Common myeloid progenitor, CD34-positive (primary cell): ENCODE measurements at regions of chr4 and their contacts with region 1.

Region 1: GRCh38 chr4:56575820-56576429 is 70.3 kb downstream of the ARL9 start:
- DNase-seq: peak; percentile 36 to 57 (median 55)
- H3K4me3 ChIP-seq: no peak overlapping the region
- H3K27ac ChIP-seq: no peak overlapping the region
- H3K4me1 ChIP-seq: peaks cover 0 to 15% (median 3%) of the 10 kb centered on the region in 4 experiments
- H3K27me3 ChIP-seq: no peaks in the 10 kb centered on the region

Region 2: GRCh38 chr4:56496241-56496640 is 79.7 kb before region 1 on chr4:
- CTCF ChIA-PET with region 1: no interaction called
- POLR2A ChIA-PET with region 1: no interaction called
- DNase-seq: no peak
- H3K4me3 ChIP-seq: no peak overlapping the region
- H3K27ac ChIP-seq: no peak overlapping the region
- H3K4me1 ChIP-seq: no peaks in the 10 kb centered on the region
- H3K27me3 ChIP-seq: no peaks in the 10 kb centered on the region

Region 3: DNA sequence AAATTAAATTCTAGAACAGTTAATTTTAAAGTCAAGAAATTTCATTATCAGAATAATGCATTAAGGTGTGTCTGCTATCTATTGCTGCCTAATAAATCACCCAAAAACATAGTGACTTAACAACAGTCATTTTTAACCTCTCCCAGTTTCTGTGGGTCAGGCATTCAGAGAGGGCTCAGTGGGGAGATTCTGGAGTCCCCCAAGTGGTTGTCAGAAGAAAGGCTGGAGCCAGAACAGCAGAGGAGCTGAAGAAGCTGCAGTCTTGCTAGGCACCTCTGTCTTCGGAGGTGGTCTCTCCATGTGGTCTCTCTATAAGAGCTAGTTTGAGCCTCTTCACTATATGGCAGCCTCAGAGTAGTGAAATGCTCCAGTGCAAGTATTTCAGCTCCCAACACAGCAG is 114.5 kb after region 1 on chr4:
- CTCF ChIA-PET with region 1: interaction called, 11 read pairs
- POLR2A ChIA-PET with region 1: no interaction called
- DNase-seq: peak in 2 of 3 donors; percentile 37 to 39
- H3K4me3 ChIP-seq: no peak overlapping the region
- H3K27ac ChIP-seq: no peak overlapping the region
- H3K4me1 ChIP-seq: peaks cover 0 to 12% (median 2%) of the 10 kb centered on the region in 4 experiments
- H3K27me3 ChIP-seq: no peaks in the 10 kb centered on the region

Region 4: DNA sequence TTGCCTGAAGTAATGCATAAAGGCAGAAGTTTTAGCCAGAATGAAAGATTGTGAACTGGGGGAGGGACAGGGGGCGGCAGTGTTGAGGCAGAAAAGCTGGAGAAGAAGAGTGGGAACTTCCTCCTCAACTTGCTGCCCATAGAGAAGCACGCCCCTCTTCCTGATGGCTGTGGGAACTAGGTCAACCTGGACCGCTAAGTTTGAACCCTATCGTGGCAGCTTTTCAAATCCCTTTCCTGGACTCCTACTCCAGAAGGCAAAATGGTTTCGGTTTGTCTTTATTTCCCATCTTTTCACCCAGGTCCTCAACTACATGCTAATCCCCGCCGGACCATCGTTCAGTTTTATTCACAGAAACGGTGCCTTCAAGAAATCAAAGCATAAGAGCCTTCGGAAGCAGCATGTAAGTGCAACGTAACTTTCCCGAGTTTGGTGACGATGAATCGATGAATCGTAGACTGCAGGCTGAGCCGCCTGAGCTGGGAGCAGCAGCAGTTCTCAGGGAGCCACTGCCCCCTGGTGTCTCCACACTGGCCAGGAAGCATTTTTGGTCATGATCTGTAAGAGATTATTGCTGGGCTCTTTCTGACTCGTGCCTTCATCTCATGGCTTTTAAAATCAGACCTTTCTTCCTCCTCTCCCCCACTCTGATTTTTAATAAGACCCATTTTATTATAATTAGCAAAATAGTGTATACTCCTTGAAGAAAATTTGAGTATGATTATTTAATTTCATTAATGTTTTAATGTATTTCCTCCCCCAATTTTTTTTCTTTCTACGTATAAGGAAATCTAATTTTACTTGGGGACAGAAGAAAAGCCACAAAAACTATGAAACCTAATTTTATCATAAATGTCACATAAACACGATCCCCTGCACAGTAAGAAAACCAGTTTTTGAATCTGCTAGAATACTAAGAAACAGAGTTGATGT is 224.2 kb after region 1 on chr4:
- CTCF ChIA-PET with region 1: interaction called, 13 read pairs
- POLR2A ChIA-PET with region 1: no interaction called
- DNase-seq: peak; percentile 90 to 95 (median 94)
- H3K4me3 ChIP-seq: peak overlapping the region; percentile 53 to 96 (median 89)
- H3K27ac ChIP-seq: peak overlapping the region; percentile 62 to 84
- H3K4me1 ChIP-seq: peaks cover 9 to 54% (median 44%) of the 10 kb centered on the region in 4 experiments
- H3K27me3 ChIP-seq: no peaks in the 10 kb centered on the region